ENCODE measurements at regions of chr9 and their contacts with region 1.

Region 1: GRCh38 chr9:105064315-105065097 is 136.6 kb upstream of the ABCA1 start:
- DNase-seq: peak; percentile 95
- H3K4me3 ChIP-seq: no peak overlapping the region
- H3K27ac ChIP-seq: peak overlapping the region; percentile 77 to 83
- H3K4me1 ChIP-seq: peaks cover 31% of the 10 kb centered on the region
- H3K27me3 ChIP-seq: no peaks in the 10 kb centered on the region
- CTCF ChIP-seq: no peak
- POLR2A ChIP-seq: no peak

Region 2: GRCh38 chr9:104606169-104606568 is 458.3 kb before region 1 on chr9:
- intact Hi-C with region 1: no loop called
- DNase-seq: no peak
- H3K4me3 ChIP-seq: no peak overlapping the region
- H3K27ac ChIP-seq: no peak overlapping the region
- H3K4me1 ChIP-seq: no peaks in the 10 kb centered on the region
- H3K27me3 ChIP-seq: no peaks in the 10 kb centered on the region
- CTCF ChIP-seq: no peak
- POLR2A ChIP-seq: no peak

Region 3: DNA sequence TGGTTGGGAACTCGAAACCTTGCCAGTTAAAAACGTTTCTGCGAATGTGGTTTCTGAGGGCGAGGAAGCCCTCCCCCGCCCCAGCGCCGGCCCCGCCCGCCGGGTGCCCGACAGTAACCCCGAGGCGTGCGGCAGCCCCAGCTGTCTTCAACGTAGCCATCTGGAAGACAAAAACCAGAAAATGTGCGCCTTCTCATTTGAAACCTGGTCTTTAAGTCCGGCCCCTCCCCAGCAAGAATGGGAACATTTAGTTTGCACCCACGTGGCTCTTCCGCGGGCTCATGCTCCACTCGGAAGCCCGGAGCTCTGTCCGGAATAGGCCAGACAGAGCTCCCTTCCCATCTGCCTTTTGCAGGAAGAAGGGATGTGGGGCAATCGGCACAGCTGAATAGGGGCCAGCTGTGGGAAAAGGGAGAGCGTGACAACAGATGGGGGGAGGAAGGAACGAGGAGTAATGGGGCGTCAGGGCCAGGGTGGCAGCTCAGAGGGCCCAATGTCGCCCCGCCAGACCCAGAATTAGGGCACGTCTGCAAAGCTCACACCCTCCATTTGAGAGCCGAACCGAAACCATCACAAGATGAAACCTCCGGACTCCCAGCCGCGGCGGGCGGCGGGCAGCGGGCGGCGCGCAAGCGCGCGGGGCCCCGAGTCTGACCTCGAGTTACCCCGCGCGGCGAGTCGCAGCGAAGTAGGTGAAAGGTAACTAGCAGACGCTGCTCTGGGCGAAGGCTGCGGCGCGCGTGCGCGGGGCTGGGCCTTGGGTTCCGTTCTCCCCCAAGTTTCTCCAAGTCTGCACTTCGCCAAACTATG is 73.2 kb before region 1 on chr9:
- intact Hi-C with region 1: loop called (anchors 10 kb)
- DNase-seq: peak; percentile 95
- H3K4me3 ChIP-seq: peak overlapping the region; percentile 57 to 71
- H3K27ac ChIP-seq: peak overlapping the region; percentile 81 to 83
- H3K4me1 ChIP-seq: peaks cover 32% of the 10 kb centered on the region
- H3K27me3 ChIP-seq: no peaks in the 10 kb centered on the region
- CTCF ChIP-seq: no peak
- POLR2A ChIP-seq: no peak